Lower leg skin (tissue), 4 donors: ENCODE measurements at regions of chr12 and their contacts with region 1.

Region 1: GRCh38 chr12:92987362-92987761 is 58.3 kb upstream of the EEA1 start:
- DNase-seq: peak in 1 of 2 donors; percentile 46
- H3K4me3 ChIP-seq: no peak overlapping the region
- CTCF ChIP-seq: no peak
- POLR2A ChIP-seq: no peak

Region 2: DNA sequence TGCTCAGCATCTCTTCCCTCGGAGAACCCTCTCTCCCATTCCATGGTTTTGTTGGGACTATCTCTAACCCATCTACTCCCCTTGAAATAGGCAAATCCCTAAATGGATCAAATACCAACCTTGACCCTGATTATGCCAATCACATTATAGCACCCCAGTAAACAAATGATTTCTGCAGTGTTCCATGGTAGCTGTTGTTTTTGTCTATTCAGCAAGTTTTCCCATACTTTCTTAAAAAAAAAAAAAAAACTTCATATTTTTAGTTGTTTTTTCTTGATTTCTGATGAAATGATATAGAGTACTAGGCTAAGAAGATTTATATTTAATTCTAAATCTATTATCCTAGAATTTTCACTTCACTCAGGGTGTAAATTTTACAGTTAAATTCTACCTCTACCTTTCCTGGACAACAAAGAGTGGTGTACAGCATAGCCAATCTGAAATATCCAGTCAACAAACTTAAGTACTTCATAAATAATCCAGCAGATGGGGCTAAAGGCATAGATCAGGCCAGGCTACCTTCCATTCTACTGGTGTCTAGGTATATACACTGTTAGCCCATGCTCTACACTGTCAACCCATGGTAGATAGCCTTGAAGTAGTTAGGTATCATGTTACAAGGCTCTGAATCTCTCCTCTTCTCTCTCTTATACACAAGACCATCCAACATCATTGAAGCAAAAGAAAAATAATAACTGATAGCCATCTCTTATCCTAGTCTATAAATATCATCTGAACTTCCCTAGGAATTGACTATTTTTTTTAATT is 202.4 kb before region 1 on chr12:
- intact Hi-C with region 1: loop called (anchors 5 kb)
- DNase-seq: no peak
- H3K4me3 ChIP-seq: no peak overlapping the region
- CTCF ChIP-seq: no peak
- POLR2A ChIP-seq: no peak

Region 3: DNA sequence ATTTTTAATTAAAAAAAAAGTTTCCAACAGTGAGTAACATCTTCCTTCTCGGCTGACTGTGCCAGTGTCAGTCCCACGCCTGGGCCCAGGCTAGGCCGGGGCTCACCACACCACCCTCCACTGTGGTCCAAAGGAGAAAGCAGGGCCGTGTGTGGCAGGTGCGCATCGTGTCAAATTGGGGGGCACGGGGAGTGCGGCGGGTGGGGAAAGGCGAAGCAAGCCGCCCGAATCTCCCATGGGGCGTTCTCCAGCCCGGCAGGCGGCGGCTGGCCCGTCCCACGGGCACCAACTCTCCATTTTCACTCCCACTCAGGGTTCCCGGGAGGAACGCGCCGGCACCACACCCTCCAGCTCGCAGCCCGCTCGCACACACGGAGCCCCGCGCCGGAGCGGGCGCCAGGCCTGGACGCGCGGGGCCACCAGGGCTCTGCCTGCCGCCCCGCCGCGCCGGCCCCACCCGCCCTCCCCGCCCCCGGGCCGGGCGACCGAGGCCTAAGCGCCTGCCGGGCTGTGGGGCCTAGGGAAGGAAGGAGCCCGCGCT is 58.9 kb before region 1 on chr12:
- intact Hi-C with region 1: no loop called
- DNase-seq: peak; percentile 34 to 89
- H3K4me3 ChIP-seq: peak overlapping the region; percentile 82
- CTCF ChIP-seq: no peak
- POLR2A ChIP-seq: no peak

Region 4: DNA sequence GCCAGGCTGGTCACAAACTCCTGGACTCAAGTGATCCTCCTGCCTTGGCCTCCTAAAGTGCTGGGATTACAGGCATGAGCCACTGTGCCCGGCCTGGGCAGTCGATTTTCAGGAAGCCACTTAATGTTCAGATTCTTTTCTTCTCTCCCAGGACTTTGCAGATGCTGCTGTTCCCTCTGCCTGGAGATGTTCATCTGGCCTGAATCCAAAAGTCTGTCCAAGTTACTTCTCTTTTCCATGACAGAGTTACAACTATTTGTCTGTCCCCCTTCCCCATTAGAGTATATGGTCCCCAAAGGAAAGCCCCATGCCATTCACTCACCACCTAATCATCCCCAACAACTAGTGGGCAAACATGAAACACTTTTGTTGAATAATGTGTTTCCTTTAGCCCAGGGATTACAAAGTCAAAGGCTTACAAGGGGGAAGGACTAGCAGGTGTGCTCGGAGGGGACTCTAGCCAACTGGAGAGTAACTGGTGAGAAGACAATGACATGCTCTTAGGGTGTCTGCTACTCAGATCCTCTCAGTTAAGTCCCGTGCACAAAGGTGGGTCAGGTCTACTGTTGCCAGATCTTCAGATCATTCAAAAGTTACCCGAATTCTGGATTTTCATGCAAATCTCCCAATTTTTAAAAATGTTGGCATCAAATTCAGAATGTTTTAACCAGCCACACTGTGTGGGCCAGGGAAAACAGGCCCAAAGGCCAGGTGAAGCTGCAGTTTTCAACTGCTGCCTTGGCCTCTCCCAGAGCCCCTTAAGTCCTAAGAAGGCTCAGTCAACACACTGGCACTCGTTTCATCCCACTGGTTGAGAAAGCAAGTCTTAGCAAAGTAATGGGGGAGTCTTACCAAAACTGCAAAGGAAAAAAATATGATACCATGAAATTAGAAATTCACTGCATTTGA is 419.9 kb after region 1 on chr12:
- intact Hi-C with region 1: no loop called
- DNase-seq: no peak
- H3K4me3 ChIP-seq: no peak overlapping the region
- CTCF ChIP-seq: no peak
- POLR2A ChIP-seq: no peak